Dorsolateral prefrontal cortex (tissue), 120 donors: ENCODE measurements at regions of chr1 and their contacts with region 1.

Region 1: DNA sequence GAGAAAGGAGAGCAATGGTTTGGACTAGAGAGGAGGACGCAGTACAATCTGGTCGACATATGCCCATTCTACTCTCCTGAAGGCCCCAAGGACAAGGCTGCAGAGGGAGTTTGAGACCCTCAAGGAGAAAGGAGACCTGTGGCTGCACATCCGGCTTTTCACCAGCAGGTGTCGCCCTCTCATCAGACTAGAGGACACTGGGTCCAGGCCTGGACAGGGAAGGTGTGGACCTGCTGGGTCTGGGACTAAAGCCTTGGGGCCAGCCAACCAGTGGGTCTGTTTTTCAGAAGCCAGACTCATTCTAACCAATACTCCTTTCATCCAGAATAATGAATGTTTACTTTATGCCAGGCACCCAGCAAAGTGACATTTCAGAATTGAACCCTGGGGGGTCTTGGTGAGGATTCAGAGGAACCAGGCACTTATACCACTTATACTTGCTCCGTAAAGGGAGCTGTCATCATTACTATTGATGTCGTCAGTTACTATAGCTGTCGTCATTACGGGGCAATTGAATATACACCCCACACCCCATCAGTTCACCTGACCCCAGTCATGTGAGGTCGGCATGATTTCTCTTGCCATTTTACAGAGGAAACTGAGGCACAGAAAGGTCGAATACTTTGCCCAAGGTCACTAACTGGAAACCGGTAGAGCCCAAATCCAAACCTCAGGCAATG is 5.1 kb downstream of the SRARP start:
- DNase-seq: peak; percentile 63 to 93 (median 83)
- H3K4me3 ChIP-seq: no peak overlapping the region
- H3K27ac ChIP-seq: peak overlapping the region in 2 of 59 donors; percentile 25 to 31
- H3K27me3 ChIP-seq: peaks cover 0 to 8% (median 0%) of the 10 kb centered on the region in 45 donors
- CTCF ChIP-seq: peak; percentile 86 to 100 (median 98)

Region 2: GRCh38 chr1:16032388-16033103 is 23.4 kb after region 1 on chr1:
- intact Hi-C with region 1: loop called in 1 of 2 experiments (anchors 2 kb)
- DNase-seq: peak; percentile 53 to 80 (median 71)
- H3K4me3 ChIP-seq: no peak overlapping the region
- H3K27ac ChIP-seq: no peak overlapping the region
- H3K27me3 ChIP-seq: peaks cover 0 to 12% (median 0%) of the 10 kb centered on the region in 45 donors
- CTCF ChIP-seq: peak; percentile 65 to 95 (median 87)

Region 3: GRCh38 chr1:16048573-16049189 is 39.5 kb after region 1 on chr1:
- intact Hi-C with region 1: loop called in 1 of 2 experiments (anchors 5 kb)
- DNase-seq: no peak
- H3K4me3 ChIP-seq: peak overlapping the region in 58 of 59 donors; percentile 9 to 65 (median 46)
- H3K27ac ChIP-seq: peak overlapping the region in 1 of 59 donors; percentile 36
- H3K27me3 ChIP-seq: peaks cover 0 to 7% (median 0%) of the 10 kb centered on the region in 45 donors
- CTCF ChIP-seq: no peak

Region 4: DNA sequence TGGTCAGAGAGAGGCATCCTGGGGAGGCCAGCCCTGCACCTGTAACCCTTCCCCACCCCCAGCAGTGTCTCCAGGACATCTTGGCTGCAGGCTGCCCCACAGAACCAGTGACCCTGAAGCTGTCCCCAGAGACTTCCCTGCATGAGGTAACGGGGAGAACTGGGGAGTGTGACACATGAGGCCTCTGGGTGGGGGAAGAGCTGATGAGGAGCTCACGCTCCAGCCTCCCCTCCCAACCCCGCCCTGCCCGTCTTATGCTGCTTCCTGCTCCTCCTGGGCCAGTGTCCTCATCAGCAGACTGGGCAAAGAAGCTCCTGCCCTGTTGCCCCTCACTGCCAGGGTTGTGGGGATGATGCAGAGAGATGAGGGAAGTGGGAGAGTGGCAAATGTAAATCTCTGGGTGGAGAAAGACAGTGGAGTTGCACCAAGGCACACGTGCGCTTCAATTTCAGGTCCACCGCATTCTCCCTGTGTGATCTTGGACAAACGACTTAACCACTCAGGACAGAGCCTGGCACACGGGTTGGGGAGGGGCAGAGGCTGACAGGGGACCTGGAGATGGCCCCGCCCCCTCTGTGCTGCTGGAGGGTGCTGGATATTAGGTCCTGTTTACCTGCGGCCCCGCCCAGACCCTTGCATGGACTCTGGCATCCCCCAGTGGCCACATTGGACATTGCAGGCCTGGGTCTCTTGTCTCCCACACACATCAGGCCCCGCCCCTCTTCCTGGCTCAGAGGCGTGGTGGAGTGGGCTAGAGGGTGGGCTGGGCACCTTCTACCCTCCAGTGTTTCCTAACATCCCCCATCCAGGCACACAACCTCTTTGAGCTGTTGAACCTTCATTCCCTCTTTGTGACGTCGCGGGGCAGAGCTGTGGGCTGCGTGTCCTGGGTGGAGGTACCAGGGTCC is 46.7 kb after region 1 on chr1:
- intact Hi-C with region 1: loop called in 1 of 2 experiments (anchors 2 kb)
- DNase-seq: peak; percentile 67 to 91 (median 80)
- H3K4me3 ChIP-seq: no peak overlapping the region
- H3K27ac ChIP-seq: no peak overlapping the region
- H3K27me3 ChIP-seq: no peaks in the 10 kb centered on the region
- CTCF ChIP-seq: peak; percentile 48 to 97 (median 84)

Region 5: GRCh38 chr1:16187748-16188401 is 178.7 kb after region 1 on chr1:
- intact Hi-C with region 1: loop called in 1 of 2 experiments (anchors 10 kb)
- DNase-seq: peak in 9 of 10 donors; percentile 37 to 81 (median 64)
- H3K4me3 ChIP-seq: no peak overlapping the region
- H3K27ac ChIP-seq: no peak overlapping the region
- H3K27me3 ChIP-seq: peaks cover 0 to 25% (median 2%) of the 10 kb centered on the region in 45 donors
- CTCF ChIP-seq: peak; percentile 58 to 97 (median 91)